CD4-positive, alpha-beta T cell (primary cell): ENCODE measurements at regions of chr3 and their contacts with region 1.

Region 1: GRCh38 chr3:42518800-42519567 is 16.5 kb downstream of the VIPR1 start:
- DNase-seq: peak in 12 of 14 experiments; percentile 14 to 75 (median 37)
- ATAC-seq: peak; percentile 67
- H3K4me3 ChIP-seq: peak overlapping the region; percentile 15
- H3K4me3 Mint-ChIP-seq: no peak overlapping the region
- H3K27ac ChIP-seq: peak overlapping the region; percentile 22 to 39
- H3K27ac Mint-ChIP-seq: peak overlapping the region; percentile 81
- H3K4me1 ChIP-seq: peaks cover 38% of the 10 kb centered on the region
- H3K4me1 Mint-ChIP-seq: peaks cover 41% of the 10 kb centered on the region
- H3K27me3 ChIP-seq: no peaks in the 10 kb centered on the region
- H3K27me3 Mint-ChIP-seq: no peaks in the 10 kb centered on the region
- CTCF ChIP-seq: peak; percentile 37

Region 2: GRCh38 chr3:42129014-42129953 is 389.7 kb before region 1 on chr3:
- CTCF ChIA-PET with region 1: no interaction called
- POLR2A ChIA-PET with region 1: no interaction called
- intact Hi-C with region 1: no loop called
- DNase-seq: no peak
- ATAC-seq: no peak
- H3K4me3 ChIP-seq: no peak overlapping the region
- H3K4me3 Mint-ChIP-seq: no peak overlapping the region
- H3K27ac ChIP-seq: no peak overlapping the region
- H3K27ac Mint-ChIP-seq: no peak overlapping the region
- H3K4me1 ChIP-seq: no peaks in the 10 kb centered on the region
- H3K4me1 Mint-ChIP-seq: no peaks in the 10 kb centered on the region
- H3K27me3 ChIP-seq: no peaks in the 10 kb centered on the region
- H3K27me3 Mint-ChIP-seq: no peaks in the 10 kb centered on the region
- CTCF ChIP-seq: no peak

Region 3: GRCh38 chr3:42468111-42468510 is 50.9 kb before region 1 on chr3:
- CTCF ChIA-PET with region 1: no interaction called
- POLR2A ChIA-PET with region 1: no interaction called
- intact Hi-C with region 1: no loop called
- DNase-seq: no peak
- ATAC-seq: no peak
- H3K4me3 ChIP-seq: no peak overlapping the region
- H3K4me3 Mint-ChIP-seq: no peak overlapping the region
- H3K27ac ChIP-seq: no peak overlapping the region
- H3K27ac Mint-ChIP-seq: no peak overlapping the region
- H3K4me1 ChIP-seq: no peaks in the 10 kb centered on the region
- H3K4me1 Mint-ChIP-seq: no peaks in the 10 kb centered on the region
- H3K27me3 ChIP-seq: peaks cover 0 to 5% of the 10 kb centered on the region in 2 experiments
- H3K27me3 Mint-ChIP-seq: peaks cover 4% of the 10 kb centered on the region
- CTCF ChIP-seq: no peak

Region 4: DNA sequence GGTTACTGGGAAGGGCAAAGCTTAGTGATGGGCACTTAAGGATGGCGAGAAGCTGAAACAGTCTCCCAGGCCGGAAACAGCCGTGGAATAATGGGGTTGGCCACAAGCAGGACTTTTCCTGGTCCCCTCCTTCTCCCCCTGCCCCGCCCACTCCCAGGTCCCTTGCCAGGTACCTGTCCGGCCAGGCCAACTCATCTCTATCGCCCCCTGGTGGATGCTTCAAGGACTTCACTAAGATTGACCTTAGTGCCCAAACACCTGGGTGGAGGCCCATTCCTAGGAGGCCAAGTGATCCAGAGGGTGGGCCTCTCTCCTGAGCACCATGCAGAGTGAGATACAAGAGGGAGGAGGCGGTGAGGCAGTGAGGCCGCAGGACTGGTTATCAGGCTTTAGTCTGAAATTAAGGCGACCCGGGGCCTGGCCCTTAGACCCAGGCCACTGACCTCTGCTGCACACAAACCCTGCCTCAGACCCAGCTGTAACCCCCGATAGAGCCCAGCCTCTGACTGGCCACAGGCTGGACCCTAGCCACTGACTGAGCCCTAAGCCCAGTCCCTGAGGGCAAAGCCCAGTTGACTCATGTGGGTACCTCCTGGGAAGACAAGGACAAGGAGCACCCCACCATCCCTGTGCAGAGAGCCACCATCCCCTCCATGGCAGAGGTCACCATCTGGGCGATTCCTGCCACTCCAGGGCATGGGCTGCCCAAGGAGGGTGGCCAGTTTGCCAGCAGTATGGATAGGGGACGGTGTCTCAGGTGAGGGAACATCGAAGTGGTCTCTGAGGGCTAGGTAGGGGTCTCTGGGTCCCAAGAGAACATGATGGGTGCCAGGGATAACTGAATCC is 21.1 kb after region 1 on chr3:
- CTCF ChIA-PET with region 1: no interaction called
- POLR2A ChIA-PET with region 1: interaction called, 4 read pairs
- intact Hi-C with region 1: loop called in 1 of 2 experiments (anchors 2 kb)
- DNase-seq: peak; percentile 39 to 81 (median 57)
- ATAC-seq: peak; percentile 71
- H3K4me3 ChIP-seq: no peak overlapping the region
- H3K4me3 Mint-ChIP-seq: no peak overlapping the region
- H3K27ac ChIP-seq: no peak overlapping the region
- H3K27ac Mint-ChIP-seq: peak overlapping the region; percentile 78
- H3K4me1 ChIP-seq: peaks cover 32% of the 10 kb centered on the region
- H3K4me1 Mint-ChIP-seq: peaks cover 29% of the 10 kb centered on the region
- H3K27me3 ChIP-seq: no peaks in the 10 kb centered on the region
- H3K27me3 Mint-ChIP-seq: no peaks in the 10 kb centered on the region
- CTCF ChIP-seq: peak; percentile 92

Region 5: GRCh38 chr3:42961633-42962032 is 442.6 kb after region 1 on chr3:
- CTCF ChIA-PET with region 1: no interaction called
- POLR2A ChIA-PET with region 1: no interaction called
- intact Hi-C with region 1: no loop called
- DNase-seq: peak in 7 of 14 experiments; percentile 4 to 66 (median 54)
- ATAC-seq: no peak
- H3K4me3 ChIP-seq: no peak overlapping the region
- H3K4me3 Mint-ChIP-seq: no peak overlapping the region
- H3K27ac ChIP-seq: no peak overlapping the region
- H3K27ac Mint-ChIP-seq: no peak overlapping the region
- H3K4me1 ChIP-seq: peaks cover 12% of the 10 kb centered on the region
- H3K4me1 Mint-ChIP-seq: peaks cover 37% of the 10 kb centered on the region
- H3K27me3 ChIP-seq: no peaks in the 10 kb centered on the region
- H3K27me3 Mint-ChIP-seq: peaks cover 4% of the 10 kb centered on the region
- CTCF ChIP-seq: peak; percentile 71